Mammary epithelial cell (primary cell): ENCODE measurements at regions of chr16 and their contacts with region 1.

Region 1: GRCh38 chr16:23362460-23363317 is 60.6 kb downstream of the SCNN1B start:
- DNase-seq: peak; percentile 48
- H3K4me3 ChIP-seq: no peak overlapping the region
- H3K27ac ChIP-seq: no peak overlapping the region
- H3K4me1 ChIP-seq: peaks cover 11% of the 10 kb centered on the region
- H3K27me3 ChIP-seq: no peaks in the 10 kb centered on the region
- CTCF ChIP-seq: no peak

Region 2: DNA sequence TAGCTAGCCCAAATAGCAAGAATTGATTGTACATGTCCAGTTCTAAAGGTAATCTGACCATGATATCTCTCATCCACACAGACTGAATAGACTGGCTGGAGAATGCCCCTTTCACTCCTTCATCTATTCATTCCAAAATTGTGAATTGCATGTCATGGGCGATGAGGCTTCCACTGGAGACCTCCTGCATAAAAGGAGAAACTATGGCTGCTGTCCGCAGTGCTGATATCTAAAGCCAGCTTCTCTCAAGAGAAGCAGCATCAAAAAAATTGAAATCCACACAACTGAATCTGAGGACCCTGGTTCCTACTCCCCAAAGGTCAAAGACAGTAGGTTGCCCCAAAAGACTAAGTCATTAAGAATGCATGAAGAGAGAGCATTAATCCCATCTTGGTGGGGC is 188.1 kb before region 1 on chr16:
- CTCF ChIA-PET with region 1: no interaction called
- dilution Hi-C with region 1: no loop called
- in situ Hi-C with region 1: no loop called
- intact Hi-C with region 1: no loop called
- DNase-seq: no peak
- H3K4me3 ChIP-seq: no peak overlapping the region
- H3K27ac ChIP-seq: no peak overlapping the region
- H3K4me1 ChIP-seq: peaks cover 13% of the 10 kb centered on the region
- H3K27me3 ChIP-seq: no peaks in the 10 kb centered on the region
- CTCF ChIP-seq: no peak

Region 3: GRCh38 chr16:23302045-23302956 is 60.4 kb before region 1 on chr16 and contains the start of gene SCNN1B:
- CTCF ChIA-PET with region 1: no interaction called
- dilution Hi-C with region 1: no loop called
- in situ Hi-C with region 1: loop called in 1 of 2 experiments (anchors 10 kb)
- intact Hi-C with region 1: no loop called
- DNase-seq: no peak
- H3K4me3 ChIP-seq: peak within 1 kb of the TSS; percentile 45 to 48 (median 45)
- H3K27ac ChIP-seq: no peak within 1 kb of the TSS
- H3K4me1 ChIP-seq: peaks cover 9% of the 10 kb centered on the region
- H3K27me3 ChIP-seq: peaks cover 10% of the 10 kb centered on the region
- CTCF ChIP-seq: no peak
- total RNA-seq, gene SCNN1B: 0.80 to 3.0 TPM

Region 4: GRCh38 chr16:23466066-23466885 is 103.6 kb after region 1 on chr16:
- CTCF ChIA-PET with region 1: no interaction called
- dilution Hi-C with region 1: loop called (anchors 5 kb)
- in situ Hi-C with region 1: no loop called
- intact Hi-C with region 1: no loop called
- DNase-seq: peak; percentile 95
- H3K4me3 ChIP-seq: no peak overlapping the region
- H3K27ac ChIP-seq: no peak overlapping the region
- H3K4me1 ChIP-seq: peaks cover 22% of the 10 kb centered on the region
- H3K27me3 ChIP-seq: no peaks in the 10 kb centered on the region
- CTCF ChIP-seq: no peak